Pancreas (tissue), 10 donors: ENCODE measurements at regions of chr1 and their contacts with region 1.

Region 1: DNA sequence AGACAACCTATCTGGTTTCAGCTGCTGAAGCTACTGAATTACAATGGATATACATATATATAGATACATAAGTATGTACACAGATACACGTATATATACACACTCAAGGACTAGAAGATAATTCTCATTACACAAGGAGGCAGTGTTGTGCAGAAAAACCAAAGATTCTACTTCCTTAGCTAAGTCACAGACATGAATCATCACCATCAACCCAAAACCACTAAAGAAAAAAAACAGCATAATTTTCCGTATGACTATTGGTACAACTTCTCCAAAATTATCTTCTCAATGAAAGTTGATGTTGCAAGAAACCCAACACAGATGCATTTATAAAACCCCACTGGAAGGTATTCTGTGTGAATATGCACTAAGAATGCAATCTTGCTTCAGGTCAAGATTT is 36.8 kb upstream of the RPF1 start:
- DNase-seq: no peak
- ATAC-seq: peak in 3 of 4 donors; percentile 88 to 96 (median 95)
- H3K4me3 ChIP-seq: no peak overlapping the region
- H3K27ac ChIP-seq: no peak overlapping the region
- H3K4me1 ChIP-seq: no peaks in the 10 kb centered on the region
- H3K27me3 ChIP-seq: no peaks in the 10 kb centered on the region
- CTCF ChIP-seq: peak in 1 of 4 donors; percentile 10

Region 2: GRCh38 chr1:84620720-84621313 is 178.6 kb after region 1 on chr1:
- intact Hi-C with region 1: loop called in 1 of 3 experiments (anchors 10 kb)
- DNase-seq: peak; percentile 61 to 92 (median 80)
- ATAC-seq: peak; percentile 94 to 96 (median 94)
- H3K4me3 ChIP-seq: peak overlapping the region; percentile 26 to 65 (median 52)
- H3K27ac ChIP-seq: peak overlapping the region in 2 of 4 donors; percentile 67 to 73
- H3K4me1 ChIP-seq: peaks cover 0 to 10% (median 5%) of the 10 kb centered on the region in 3 donors
- H3K27me3 ChIP-seq: no peaks in the 10 kb centered on the region
- CTCF ChIP-seq: peak; percentile 90 to 99 (median 98)

Region 3: DNA sequence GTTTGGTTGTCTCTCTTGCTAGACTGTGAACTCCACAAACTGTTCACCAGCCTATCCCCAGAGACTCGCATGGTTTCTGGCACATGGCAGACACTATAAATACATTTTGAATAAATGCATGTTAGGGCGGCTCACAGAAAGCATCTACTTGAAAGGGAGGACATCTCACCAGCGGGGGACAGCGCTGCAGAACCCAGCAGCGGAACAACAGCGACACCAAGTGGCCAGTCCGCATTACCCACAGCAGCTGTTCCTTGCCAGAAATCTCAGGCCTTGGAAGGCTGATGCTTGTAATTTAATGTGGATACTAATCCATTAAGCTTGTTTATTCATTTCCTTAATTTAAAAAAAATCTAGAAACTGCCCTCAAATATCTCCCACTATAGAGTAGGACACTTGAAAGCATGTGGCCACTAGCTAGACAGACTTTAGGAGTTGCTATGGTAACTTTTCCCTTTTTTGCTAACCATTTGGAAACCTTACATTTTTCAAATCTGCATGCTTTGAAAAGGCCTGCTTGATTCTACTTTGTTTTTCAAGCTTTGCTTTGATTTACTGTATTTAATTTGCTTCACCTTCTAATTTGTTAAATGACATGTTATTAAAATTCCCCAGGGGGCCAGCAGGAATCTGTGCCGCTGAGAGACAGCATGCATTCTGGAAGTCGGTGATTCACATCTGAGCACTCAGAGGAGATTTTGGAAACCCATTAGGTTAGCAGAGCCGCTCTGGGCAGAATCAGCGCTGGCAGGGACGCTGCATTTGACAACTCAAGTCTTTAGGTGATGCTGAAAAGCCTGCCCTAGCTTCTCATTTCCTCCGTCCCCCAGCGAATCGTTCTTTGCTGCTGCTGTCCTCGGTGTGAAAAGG is 311.5 kb after region 1 on chr1:
- intact Hi-C with region 1: loop called in 1 of 3 experiments (anchors 5 kb)
- DNase-seq: peak; percentile 56 to 90 (median 72)
- ATAC-seq: peak; percentile 79 to 96 (median 94)
- H3K4me3 ChIP-seq: no peak overlapping the region
- H3K27ac ChIP-seq: no peak overlapping the region
- H3K4me1 ChIP-seq: no peaks in the 10 kb centered on the region
- H3K27me3 ChIP-seq: no peaks in the 10 kb centered on the region
- CTCF ChIP-seq: peak; percentile 69 to 95 (median 82)

Region 4: DNA sequence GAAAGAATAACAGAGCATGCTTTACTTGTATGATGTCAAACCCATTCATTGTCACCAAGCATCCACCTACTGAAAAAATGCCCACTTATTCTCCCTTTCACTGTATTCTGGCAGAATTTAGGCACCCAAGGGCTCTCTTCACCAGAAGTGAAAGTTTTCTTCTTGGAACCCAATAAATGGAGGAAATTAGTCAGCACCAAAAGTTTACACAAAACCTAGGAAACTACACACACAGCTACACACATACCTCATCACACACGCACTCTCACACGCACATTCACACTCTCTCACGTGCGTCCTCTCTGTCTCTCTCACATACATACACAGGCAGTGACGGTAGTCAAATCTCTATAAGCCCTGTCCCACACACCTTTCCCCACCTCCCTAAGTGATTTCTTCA is 517.0 kb after region 1 on chr1:
- intact Hi-C with region 1: no loop called
- DNase-seq: no peak
- ATAC-seq: no peak
- H3K4me3 ChIP-seq: no peak overlapping the region
- H3K27ac ChIP-seq: no peak overlapping the region
- H3K4me1 ChIP-seq: no peaks in the 10 kb centered on the region
- H3K27me3 ChIP-seq: no peaks in the 10 kb centered on the region
- CTCF ChIP-seq: no peak